ENCODE measurements at regions of chr2 and their contacts with region 1.

Region 1: GRCh38 chr2:232321156-232321816 is 57.3 kb upstream of the ALPP start:
- DNase-seq: peak in 1 of 2 experiments; percentile 79
- H3K4me3 ChIP-seq: no peak overlapping the region
- H3K27ac ChIP-seq: no peak overlapping the region
- H3K4me1 ChIP-seq: peaks cover 0 to 10% (median 3%) of the 10 kb centered on the region in 4 experiments; a peak in 5 of 7 replicates
- H3K27me3 ChIP-seq: no peaks in the 10 kb centered on the region
- CTCF ChIP-seq: peak in 2 of 3 experiments; percentile 49 to 56; a peak in 3 of 4 replicates
- EP300 ChIP-seq: no peak
- POLR2A ChIP-seq: no peak
- RAD21 ChIP-seq: peak; percentile 23 to 31; a peak in 3 of 4 replicates

Region 2: GRCh38 chr2:231910771-231911170 is 410.5 kb before region 1 on chr2:
- CTCF ChIA-PET with region 1: interaction called, 23 read pairs
- POLR2A ChIA-PET with region 1: no interaction called
- DNase-seq: no peak
- H3K4me3 ChIP-seq: no peak overlapping the region
- H3K27ac ChIP-seq: no peak overlapping the region
- H3K4me1 ChIP-seq: peaks cover 0 to 6% (median under 1%) of the 10 kb centered on the region in 4 experiments; a peak in 1 of 7 replicates
- H3K27me3 ChIP-seq: no peaks in the 10 kb centered on the region
- CTCF ChIP-seq: no peak
- EP300 ChIP-seq: no peak
- POLR2A ChIP-seq: no peak
- RAD21 ChIP-seq: no peak

Region 3: DNA sequence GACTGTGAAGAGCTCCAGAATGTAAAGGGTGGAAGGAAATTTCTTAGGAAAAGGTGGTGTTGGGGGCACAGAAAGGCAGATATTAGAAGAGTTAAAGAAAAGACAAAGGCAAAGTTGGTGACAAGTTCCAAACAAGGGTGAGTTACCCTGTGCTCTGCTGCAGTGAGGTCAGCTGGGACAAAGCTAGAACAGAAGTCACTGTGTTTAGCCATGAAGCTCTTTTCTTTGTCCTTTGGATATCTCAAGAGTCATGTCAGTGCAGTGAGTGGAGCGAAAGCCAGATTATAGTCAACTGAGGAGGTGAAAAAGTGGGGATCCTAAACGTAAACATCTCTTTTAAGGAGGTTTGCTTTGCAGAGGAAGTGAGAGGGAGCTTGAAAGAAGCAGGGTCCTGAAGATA is 130.5 kb before region 1 on chr2:
- CTCF ChIA-PET with region 1: no interaction called
- POLR2A ChIA-PET with region 1: no interaction called
- DNase-seq: no peak
- H3K4me3 ChIP-seq: no peak overlapping the region
- H3K27ac ChIP-seq: no peak overlapping the region
- H3K4me1 ChIP-seq: peaks cover 0 to 4% (median 1%) of the 10 kb centered on the region in 4 experiments; a peak in 4 of 7 replicates
- H3K27me3 ChIP-seq: peaks cover 0 to 1% (median 0%) of the 10 kb centered on the region in 4 experiments; a peak in 1 of 7 replicates
- CTCF ChIP-seq: no peak
- EP300 ChIP-seq: no peak
- POLR2A ChIP-seq: no peak
- RAD21 ChIP-seq: no peak

Region 4: DNA sequence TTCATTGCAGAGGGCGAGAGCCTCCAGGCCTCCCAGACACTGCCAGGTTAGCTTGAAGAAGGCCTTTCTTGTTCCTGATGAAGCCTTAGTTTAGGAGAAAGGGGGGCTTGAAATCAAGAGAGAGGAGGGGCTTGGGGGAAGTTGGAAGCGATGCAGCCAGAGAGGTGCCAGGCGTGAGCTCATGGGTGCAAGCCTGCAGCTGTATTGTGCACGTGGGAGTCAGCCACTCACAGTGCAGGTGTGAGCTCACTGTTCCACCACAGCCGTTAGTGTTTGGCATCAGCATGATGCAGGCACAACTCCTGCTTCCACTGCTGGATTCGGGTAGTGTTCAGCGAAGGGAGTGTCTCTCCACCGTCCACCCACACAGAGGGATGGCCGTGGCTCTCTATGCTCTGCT is 11.2 kb before region 1 on chr2:
- CTCF ChIA-PET with region 1: interaction called, 46 read pairs
- POLR2A ChIA-PET with region 1: no interaction called
- DNase-seq: no peak
- H3K4me3 ChIP-seq: no peak overlapping the region
- H3K27ac ChIP-seq: no peak overlapping the region
- H3K4me1 ChIP-seq: no peaks in the 10 kb centered on the region
- H3K27me3 ChIP-seq: no peaks in the 10 kb centered on the region
- CTCF ChIP-seq: no peak
- EP300 ChIP-seq: no peak
- POLR2A ChIP-seq: no peak
- RAD21 ChIP-seq: no peak